HepG2 (cell line): ENCODE measurements at regions of chr12 and their contacts with region 1.

Region 1: GRCh38 chr12:112116232-112117060 is 7.9 kb upstream of the NAA25 start:
- DNase-seq: peak; percentile 83
- ATAC-seq: peak; percentile 97
- H3K4me3 ChIP-seq: peak overlapping the region; percentile 51 to 62 (median 59)
- H3K27ac ChIP-seq: peak overlapping the region; percentile 68
- H3K4me1 ChIP-seq: peaks cover 48% of the 10 kb centered on the region
- H3K27me3 ChIP-seq: no peaks in the 10 kb centered on the region; a peak in 1 of 5 replicates
- CTCF ChIP-seq: no peak
- EP300 ChIP-seq: no peak
- POLR2A ChIP-seq: peak; percentile 71 to 95
- RAD21 ChIP-seq: no peak

Region 2: GRCh38 chr12:112170376-112170775 is 53.9 kb after region 1 on chr12:
- CTCF ChIA-PET with region 1: no interaction called
- POLR2A ChIA-PET with region 1: no interaction called
- in situ Hi-C with region 1: loop called (anchors 5 kb)
- intact Hi-C with region 1: loop called (anchors 5 kb)
- DNase-seq: no peak
- ATAC-seq: peak; percentile 71
- H3K4me3 ChIP-seq: no peak overlapping the region
- H3K27ac ChIP-seq: no peak overlapping the region
- H3K4me1 ChIP-seq: no peaks in the 10 kb centered on the region
- H3K27me3 ChIP-seq: no peaks in the 10 kb centered on the region
- CTCF ChIP-seq: peak; percentile 74
- EP300 ChIP-seq: no peak
- POLR2A ChIP-seq: no peak
- RAD21 ChIP-seq: peak; percentile 36; the same call in 1 of the 2 replicates

Region 3: GRCh38 chr12:112190648-112191047 is 74.2 kb after region 1 on chr12:
- CTCF ChIA-PET with region 1: no interaction called
- POLR2A ChIA-PET with region 1: no interaction called
- in situ Hi-C with region 1: no loop called
- intact Hi-C with region 1: no loop called
- DNase-seq: no peak
- ATAC-seq: no peak; the same call in 2 of the 3 replicates
- H3K4me3 ChIP-seq: no peak overlapping the region
- H3K27ac ChIP-seq: no peak overlapping the region
- H3K4me1 ChIP-seq: peaks cover 10% of the 10 kb centered on the region
- H3K27me3 ChIP-seq: no peaks in the 10 kb centered on the region
- CTCF ChIP-seq: no peak
- EP300 ChIP-seq: no peak
- POLR2A ChIP-seq: no peak
- RAD21 ChIP-seq: no peak

Region 4: GRCh38 chr12:112418608-112419298 is 302.3 kb after region 1 on chr12 and contains the start of gene PTPN11:
- CTCF ChIA-PET with region 1: no interaction called
- POLR2A ChIA-PET with region 1: no interaction called
- in situ Hi-C with region 1: loop called (anchors 10 kb)
- intact Hi-C with region 1: no loop called
- DNase-seq: peak; percentile 55
- ATAC-seq: peak; percentile 81
- H3K4me3 ChIP-seq: peak within 1 kb of the TSS; percentile 64 to 94 (median 88)
- H3K27ac ChIP-seq: peak within 1 kb of the TSS; percentile 87
- H3K4me1 ChIP-seq: peaks cover 56% of the 10 kb centered on the region
- H3K27me3 ChIP-seq: no peaks in the 10 kb centered on the region; a peak in 1 of 5 replicates
- CTCF ChIP-seq: peak; percentile 38; the same call in 1 of the 2 replicates
- EP300 ChIP-seq: 0 out of 4 replicates have a peak, but pooled peaks of 1 of the 2 experiments have one; percentile 15
- POLR2A ChIP-seq: peak; percentile 78 to 96
- RAD21 ChIP-seq: peak; percentile 46; the same call in 1 of the 2 replicates
- total RNA-seq, gene PTPN11: 63.5 and 101 TPM in 2 replicates